Prostate gland (tissue), 2 donors: ENCODE measurements at regions of chr10 and their contacts with region 1.

Region 1: GRCh38 chr10:121608469-121609190 is 10.4 kb upstream of the FGFR2 start:
- DNase-seq: no peak
- H3K4me3 ChIP-seq: peak overlapping the region; percentile 7 to 27
- H3K27ac ChIP-seq: no peak overlapping the region
- H3K4me1 ChIP-seq: no peaks in the 10 kb centered on the region
- H3K27me3 ChIP-seq: no peaks in the 10 kb centered on the region
- CTCF ChIP-seq: peak; percentile 91 to 97 (median 94)
- POLR2A ChIP-seq: no peak

Region 2: DNA sequence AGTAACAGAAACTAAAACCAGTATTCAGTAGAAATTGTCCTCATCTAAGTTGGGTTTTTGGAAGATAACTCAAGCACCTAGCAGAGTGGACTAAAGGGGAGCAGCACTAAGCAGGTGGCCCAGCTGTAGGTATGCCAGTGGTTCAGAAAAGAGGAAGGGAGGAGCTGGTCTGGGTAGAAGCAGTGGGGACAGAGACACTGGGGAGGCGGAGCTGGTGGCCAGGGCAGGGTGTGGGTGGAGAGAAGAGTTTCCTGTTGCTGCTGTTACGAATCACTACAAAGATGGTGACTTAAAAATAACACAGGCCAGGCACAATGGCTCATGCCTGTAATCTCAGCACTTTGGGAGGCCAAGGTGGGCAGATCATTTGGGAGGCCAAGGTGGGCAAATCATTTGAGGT is 621.3 kb before region 1 on chr10:
- intact Hi-C with region 1: no loop called
- DNase-seq: no peak
- H3K4me3 ChIP-seq: no peak overlapping the region
- H3K27ac ChIP-seq: no peak overlapping the region
- H3K4me1 ChIP-seq: no peaks in the 10 kb centered on the region
- H3K27me3 ChIP-seq: no peaks in the 10 kb centered on the region
- CTCF ChIP-seq: no peak
- POLR2A ChIP-seq: no peak

Region 3: GRCh38 chr10:121580276-121581116 is 28.1 kb before region 1 on chr10:
- intact Hi-C with region 1: no loop called
- DNase-seq: no peak
- H3K4me3 ChIP-seq: no peak overlapping the region
- H3K27ac ChIP-seq: no peak overlapping the region
- H3K4me1 ChIP-seq: peaks cover 4% of the 10 kb centered on the region
- H3K27me3 ChIP-seq: no peaks in the 10 kb centered on the region
- CTCF ChIP-seq: no peak
- POLR2A ChIP-seq: no peak

Region 4: DNA sequence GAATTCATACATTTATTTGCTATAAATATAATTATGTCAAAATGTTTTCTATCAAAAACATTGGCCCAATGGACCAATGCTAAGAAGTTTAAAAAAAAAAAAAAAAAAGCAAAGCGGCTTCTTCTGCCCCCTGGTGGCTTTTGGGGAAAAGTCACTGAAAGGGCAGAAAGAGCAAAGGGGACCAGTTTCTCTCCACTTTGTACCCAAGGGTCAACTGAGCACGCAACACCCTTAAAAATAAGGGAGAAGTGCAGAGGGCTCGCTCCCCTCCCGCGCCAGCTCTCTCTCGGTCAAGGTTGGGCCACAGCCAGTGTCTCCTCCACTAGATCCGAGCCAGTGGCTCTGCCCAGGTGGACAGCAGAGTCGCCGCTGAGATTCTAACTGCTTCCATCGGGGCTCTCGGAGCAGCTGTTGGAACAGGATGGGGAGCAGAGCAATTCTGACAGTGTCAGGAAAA is 126.0 kb after region 1 on chr10:
- intact Hi-C with region 1: loop called (anchors 5 kb)
- DNase-seq: no peak
- H3K4me3 ChIP-seq: no peak overlapping the region
- H3K27ac ChIP-seq: no peak overlapping the region
- H3K4me1 ChIP-seq: no peaks in the 10 kb centered on the region
- H3K27me3 ChIP-seq: no peaks in the 10 kb centered on the region
- CTCF ChIP-seq: peak; percentile 44 to 48 (median 46)
- POLR2A ChIP-seq: no peak